ENCODE measurements at regions of chr7 and their contacts with region 1.

Region 1: GRCh38 chr7:68470836-68471435 is 1127.3 kb upstream of the AUTS2 start:
- DNase-seq: no peak
- H3K4me3 ChIP-seq: no peak overlapping the region
- H3K27ac ChIP-seq: no peak overlapping the region
- H3K4me1 ChIP-seq: no peaks in the 10 kb centered on the region
- H3K27me3 ChIP-seq: no peaks in the 10 kb centered on the region
- CTCF ChIP-seq: no peak

Region 2: GRCh38 chr7:68394131-68394530 is 76.8 kb before region 1 on chr7:
- CTCF ChIA-PET with region 1: no interaction called
- POLR2A ChIA-PET with region 1: no interaction called
- intact Hi-C with region 1: no loop called
- DNase-seq: no peak
- H3K4me3 ChIP-seq: no peak overlapping the region
- H3K27ac ChIP-seq: no peak overlapping the region
- H3K4me1 ChIP-seq: no peaks in the 10 kb centered on the region
- H3K27me3 ChIP-seq: no peaks in the 10 kb centered on the region
- CTCF ChIP-seq: no peak

Region 3: GRCh38 chr7:68440866-68441265 is 30.1 kb before region 1 on chr7:
- CTCF ChIA-PET with region 1: interaction called, 13 read pairs
- POLR2A ChIA-PET with region 1: no interaction called
- intact Hi-C with region 1: no loop called
- DNase-seq: peak; percentile 38
- H3K4me3 ChIP-seq: no peak overlapping the region
- H3K27ac ChIP-seq: no peak overlapping the region
- H3K4me1 ChIP-seq: peaks cover 8% of the 10 kb centered on the region
- H3K27me3 ChIP-seq: no peaks in the 10 kb centered on the region
- CTCF ChIP-seq: no peak

Region 4: DNA sequence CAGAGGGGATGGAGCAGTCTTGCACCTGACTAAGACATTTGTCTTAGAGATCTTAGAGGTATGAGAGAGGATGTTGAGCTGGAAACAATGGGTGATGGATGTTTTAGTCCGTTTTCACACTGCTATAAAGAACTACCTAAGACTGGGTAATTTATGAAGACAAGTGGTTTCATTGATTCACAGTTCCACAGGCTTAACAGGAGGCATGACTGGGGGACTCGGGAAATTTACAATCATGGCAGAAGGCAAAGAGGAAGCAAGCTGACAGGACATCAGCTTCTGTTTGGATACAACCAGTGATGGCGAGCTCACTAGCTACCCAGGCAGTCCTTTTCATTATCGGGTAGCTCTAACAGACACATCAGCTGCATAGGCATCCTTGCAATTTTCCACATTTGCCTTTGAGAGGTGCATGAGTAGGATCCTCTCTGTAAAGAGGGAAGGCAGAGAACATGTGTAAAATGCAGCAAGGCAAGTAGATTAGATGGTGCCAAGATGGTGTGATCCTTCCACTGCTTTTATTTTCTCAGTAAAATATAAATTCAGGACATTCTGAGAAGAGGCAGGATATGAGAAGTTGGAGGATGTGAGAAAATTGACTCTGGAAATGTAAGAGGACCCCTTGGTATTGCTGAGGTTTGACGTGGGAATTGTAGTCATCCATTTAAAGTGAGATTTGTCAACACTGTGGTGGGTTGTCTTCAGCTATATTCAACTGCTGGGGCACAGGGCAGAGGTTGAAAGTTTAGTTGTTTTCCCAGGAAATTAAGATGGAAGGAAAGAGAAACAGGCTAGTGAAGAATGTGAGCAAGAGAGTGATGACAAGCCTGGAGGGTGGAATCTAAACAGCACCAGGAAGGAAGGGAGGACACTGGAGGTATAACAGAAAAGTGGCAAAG is 12.7 kb before region 1 on chr7:
- CTCF ChIA-PET with region 1: no interaction called
- POLR2A ChIA-PET with region 1: no interaction called
- intact Hi-C with region 1: no loop called
- DNase-seq: no peak
- H3K4me3 ChIP-seq: no peak overlapping the region
- H3K27ac ChIP-seq: no peak overlapping the region
- H3K4me1 ChIP-seq: peaks cover 11% of the 10 kb centered on the region
- H3K27me3 ChIP-seq: no peaks in the 10 kb centered on the region
- CTCF ChIP-seq: no peak